ENCODE measurements at regions of chr19 and their contacts with region 1.

Region 1: DNA sequence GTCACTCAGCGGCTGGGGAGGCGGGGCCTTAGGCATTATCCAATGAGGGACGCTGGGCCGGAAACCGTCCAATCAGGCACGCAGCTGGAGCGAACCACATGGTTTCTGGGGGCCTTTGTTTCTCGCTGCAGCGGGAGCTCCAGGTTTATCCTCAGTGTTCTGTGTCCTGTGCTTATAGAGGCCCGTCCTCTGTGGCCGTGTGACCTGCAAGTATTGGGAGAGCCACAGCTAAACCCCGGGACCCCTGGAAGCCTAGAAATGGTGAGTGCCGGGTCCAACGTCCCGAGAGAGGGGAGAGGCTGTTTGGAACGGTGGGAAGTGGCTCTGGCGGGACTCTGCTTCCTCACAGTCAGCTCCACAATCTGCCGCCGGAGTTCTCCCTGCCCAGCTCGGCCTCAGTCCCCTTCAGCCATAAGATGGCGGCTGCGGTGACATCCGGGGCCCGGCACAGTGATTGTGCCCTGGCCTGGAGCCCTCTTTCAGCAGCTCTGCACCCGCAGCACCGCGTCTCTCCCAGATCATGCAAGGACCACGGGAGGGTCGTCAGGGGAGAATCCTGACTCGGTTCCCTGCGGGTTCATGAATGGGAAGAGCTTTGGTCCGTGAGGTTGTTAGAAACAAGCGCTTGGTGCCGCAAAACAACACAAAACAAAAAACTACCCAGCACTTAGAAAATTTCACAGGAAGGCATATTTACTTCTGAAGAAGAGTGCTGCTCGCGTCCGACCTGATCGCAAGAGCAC is at the start of gene ZNF253:
- DNase-seq: peak; percentile 92
- H3K4me3 ChIP-seq: peak within 1 kb of the TSS; percentile 57 to 79 (median 57)
- H3K27ac ChIP-seq: no peak within 1 kb of the TSS
- H3K4me1 ChIP-seq: peaks cover 3% of the 10 kb centered on the region
- H3K27me3 ChIP-seq: no peaks in the 10 kb centered on the region
- CTCF ChIP-seq: no peak
- total RNA-seq, gene ZNF253: 5.6 to 11.5 TPM

Region 2: GRCh38 chr19:19835560-19836038 is 30.3 kb before region 1 on chr19:
- CTCF ChIA-PET with region 1: no interaction called
- dilution Hi-C with region 1: no loop called
- in situ Hi-C with region 1: no loop called
- intact Hi-C with region 1: no loop called
- DNase-seq: peak; percentile 1
- H3K4me3 ChIP-seq: no peak overlapping the region
- H3K27ac ChIP-seq: no peak overlapping the region
- H3K4me1 ChIP-seq: no peaks in the 10 kb centered on the region
- H3K27me3 ChIP-seq: no peaks in the 10 kb centered on the region
- CTCF ChIP-seq: no peak

Region 3: DNA sequence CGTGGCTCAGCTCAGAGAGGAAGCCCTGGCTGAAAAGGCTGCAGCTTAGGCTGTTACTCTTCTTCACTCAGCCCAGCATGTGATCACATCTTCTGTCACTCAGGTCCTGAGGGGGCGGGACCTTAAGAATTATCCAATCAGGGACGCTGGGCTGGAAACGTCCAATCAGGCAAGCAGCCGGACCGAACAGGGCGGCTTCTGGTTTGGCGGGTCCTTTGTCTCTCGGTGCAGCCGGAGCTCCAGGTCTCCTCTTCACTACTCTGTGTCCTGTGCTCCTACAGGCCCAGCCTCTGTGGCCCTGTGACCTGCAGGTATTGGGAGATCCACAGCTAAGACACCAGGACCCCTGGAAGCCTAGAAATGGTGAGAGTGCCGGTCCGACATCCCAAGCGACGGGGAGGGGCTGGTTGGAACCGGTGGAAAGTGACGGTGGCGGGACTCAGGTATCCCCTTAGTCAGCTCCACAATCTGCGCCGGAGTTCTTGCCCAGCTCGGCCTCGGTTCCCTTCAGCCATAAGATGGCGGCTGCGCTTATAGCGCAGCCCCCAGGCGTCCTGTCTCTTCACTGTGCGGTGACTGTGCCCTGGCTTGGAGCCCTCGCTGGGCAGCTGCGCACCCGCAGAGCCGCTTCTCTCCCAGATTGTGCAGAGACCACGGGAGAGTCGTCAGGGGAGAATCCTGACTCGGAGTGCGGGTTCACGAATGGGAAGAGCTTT is 35.0 kb after region 1 on chr19 and contains the start of gene ZNF93:
- CTCF ChIA-PET with region 1: no interaction called
- dilution Hi-C with region 1: no loop called
- in situ Hi-C with region 1: no loop called
- intact Hi-C with region 1: loop called (anchors 2 kb)
- DNase-seq: peak; percentile 95
- H3K4me3 ChIP-seq: peak within 1 kb of the TSS; percentile 41 to 50 (median 43)
- H3K27ac ChIP-seq: no peak within 1 kb of the TSS
- H3K4me1 ChIP-seq: no peaks in the 10 kb centered on the region
- H3K27me3 ChIP-seq: no peaks in the 10 kb centered on the region
- CTCF ChIP-seq: no peak
- total RNA-seq, gene ZNF93: 6.4 to 16.8 TPM

Measured in mammary epithelial cell (primary cell).